HepG2 (cell line): ENCODE measurements at regions of chr5 and their contacts with region 1.

Region 1: DNA sequence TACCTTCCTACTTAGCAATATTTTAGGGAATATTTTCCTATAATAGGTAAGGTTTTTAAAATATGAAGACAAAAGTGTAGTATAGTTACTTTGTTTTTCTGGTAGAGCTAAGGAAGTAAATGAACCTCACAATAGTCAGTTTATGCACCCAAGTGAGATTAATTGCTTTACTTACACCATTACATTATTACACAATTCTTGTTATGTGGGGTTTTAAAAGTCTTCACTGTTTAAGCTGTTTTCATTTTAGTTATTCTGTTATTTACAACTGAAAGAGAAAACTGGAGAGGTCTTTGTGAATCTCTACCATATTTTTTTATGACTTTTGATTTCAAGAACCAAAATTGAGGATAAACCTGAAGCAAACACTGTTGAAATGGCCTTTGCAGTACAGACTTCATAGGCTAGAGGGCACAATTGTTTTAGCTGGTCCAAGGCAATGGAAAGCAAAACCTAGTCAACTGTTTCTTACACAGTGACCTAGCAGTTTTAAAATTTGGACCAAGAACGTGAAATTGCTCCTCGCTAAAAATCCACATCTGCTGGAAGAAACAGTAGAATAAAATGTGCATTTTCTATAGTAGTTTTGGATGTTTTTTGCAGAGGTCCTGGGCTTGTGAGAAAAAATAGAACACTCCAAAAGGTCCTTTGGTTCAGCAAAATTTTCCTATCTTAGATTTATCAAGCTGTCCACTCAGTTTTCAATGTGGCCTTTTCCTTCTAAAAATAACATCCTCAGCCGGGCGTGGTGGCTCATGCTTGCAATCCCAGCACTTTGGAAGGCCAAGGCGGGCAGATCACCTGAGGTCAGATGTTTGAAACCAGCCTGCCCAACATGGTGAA is 66.4 kb upstream of the FER start:
- DNase-seq: peak; percentile 50
- ATAC-seq: peak; percentile 78
- H3K4me3 ChIP-seq: no peak overlapping the region
- H3K27ac ChIP-seq: no peak overlapping the region
- H3K4me1 ChIP-seq: peaks cover 12% of the 10 kb centered on the region
- H3K27me3 ChIP-seq: no peaks in the 10 kb centered on the region; a peak in 1 of 5 replicates
- CTCF ChIP-seq: peak; percentile 78
- EP300 ChIP-seq: no peak
- POLR2A ChIP-seq: no peak
- RAD21 ChIP-seq: peak; percentile 65

Region 2: DNA sequence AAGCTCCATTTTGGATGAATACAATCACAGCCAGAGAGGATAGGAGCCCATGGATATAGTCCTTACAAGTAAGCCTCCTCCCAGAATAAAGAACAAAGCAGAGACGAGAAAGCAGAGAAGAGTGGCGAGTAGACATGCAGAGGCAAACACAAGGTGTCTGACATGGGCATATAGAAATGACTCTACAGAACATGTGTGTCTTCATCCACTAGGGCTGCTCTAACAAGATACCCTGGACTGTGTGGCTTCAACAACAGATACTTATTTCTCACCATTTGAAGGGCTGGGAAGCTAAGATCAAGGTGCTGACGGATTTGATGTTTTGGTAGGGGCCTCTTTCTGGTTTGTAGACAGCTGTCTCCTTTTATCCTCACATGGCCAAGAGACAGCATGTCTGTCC is 34.1 kb after region 1 on chr5:
- CTCF ChIA-PET with region 1: no interaction called
- POLR2A ChIA-PET with region 1: no interaction called
- in situ Hi-C with region 1: no loop called
- intact Hi-C with region 1: no loop called
- DNase-seq: no peak
- ATAC-seq: peak; percentile 66
- H3K4me3 ChIP-seq: no peak overlapping the region
- H3K27ac ChIP-seq: no peak overlapping the region
- H3K4me1 ChIP-seq: no peaks in the 10 kb centered on the region
- H3K27me3 ChIP-seq: peaks cover 0 to 3% of the 10 kb centered on the region in 2 experiments; a peak in 1 of 5 replicates
- CTCF ChIP-seq: no peak
- EP300 ChIP-seq: no peak
- POLR2A ChIP-seq: no peak
- RAD21 ChIP-seq: no peak

Region 3: DNA sequence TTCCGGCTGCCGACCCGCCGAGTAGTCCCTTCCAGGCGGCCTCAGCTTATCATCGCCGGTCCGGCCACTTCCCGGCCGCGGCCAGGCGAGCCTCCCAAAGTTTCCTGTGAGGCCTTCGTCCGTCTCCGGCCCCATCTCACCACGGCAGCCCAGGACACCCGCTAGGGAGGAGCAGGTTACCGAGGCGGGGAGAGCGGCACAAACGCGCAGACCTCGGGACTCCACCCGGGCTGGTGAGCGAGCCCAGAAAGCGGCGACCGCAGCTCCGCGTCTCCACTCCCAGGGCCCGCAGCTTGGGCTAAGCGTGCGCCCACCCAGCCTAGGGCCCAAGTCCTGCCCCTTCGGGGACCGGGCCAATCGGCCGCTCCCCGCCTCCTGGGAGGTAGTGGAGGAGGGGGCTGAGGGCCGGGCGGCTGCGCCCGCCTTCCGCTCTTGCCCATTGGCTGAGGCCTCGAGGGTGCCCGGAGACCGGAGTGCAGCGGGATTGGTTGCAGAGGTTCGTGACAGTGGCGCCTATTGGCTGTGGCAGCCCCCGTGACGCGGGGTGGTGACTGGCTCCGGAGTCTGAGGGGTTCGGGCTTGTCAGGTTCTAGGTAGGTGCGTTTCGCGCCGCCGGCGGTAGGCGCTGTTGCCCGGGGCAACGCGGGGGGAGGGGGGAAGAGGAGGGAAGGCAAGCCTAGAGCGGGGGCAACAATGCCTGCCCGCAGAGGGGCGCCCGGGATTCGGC is 67.3 kb after region 1 on chr5:
- CTCF ChIA-PET with region 1: no interaction called
- POLR2A ChIA-PET with region 1: interaction called, 3 read pairs
- in situ Hi-C with region 1: no loop called
- intact Hi-C with region 1: loop called (anchors 2 kb)
- DNase-seq: peak; percentile 96
- ATAC-seq: peak; percentile 98
- H3K4me3 ChIP-seq: peak overlapping the region; percentile 80 to 83 (median 80)
- H3K27ac ChIP-seq: peak overlapping the region; percentile 81
- H3K4me1 ChIP-seq: peaks cover 14% of the 10 kb centered on the region
- H3K27me3 ChIP-seq: peaks cover 0 to 4% of the 10 kb centered on the region in 2 experiments; a peak in 1 of 5 replicates
- CTCF ChIP-seq: peak; percentile 69
- EP300 ChIP-seq: no peak
- POLR2A ChIP-seq: peak; percentile 96 to 99
- RAD21 ChIP-seq: peak; percentile 50; the same call in 1 of the 2 replicates